ENCODE measurements at regions of chr6 and their contacts with region 1.

Region 1: GRCh38 chr6:165468836-165469235 is 159.4 kb upstream of the C6orf118 start:
- DNase-seq: no peak
- H3K4me3 ChIP-seq: no peak overlapping the region
- H3K27ac ChIP-seq: no peak overlapping the region
- H3K4me1 ChIP-seq: no peaks in the 10 kb centered on the region
- H3K27me3 ChIP-seq: no peaks in the 10 kb centered on the region
- CTCF ChIP-seq: no peak
- POLR2A ChIP-seq: no peak

Region 2: GRCh38 chr6:165536911-165537310 is 68.1 kb after region 1 on chr6:
- intact Hi-C with region 1: loop called (anchors 5 kb)
- DNase-seq: no peak
- H3K4me3 ChIP-seq: no peak overlapping the region
- H3K27ac ChIP-seq: no peak overlapping the region
- H3K4me1 ChIP-seq: no peaks in the 10 kb centered on the region
- H3K27me3 ChIP-seq: no peaks in the 10 kb centered on the region
- CTCF ChIP-seq: no peak
- POLR2A ChIP-seq: no peak

Region 3: GRCh38 chr6:166586424-166587156 is 1117.8 kb after region 1 on chr6 and contains the start of gene RAMACL:
- intact Hi-C with region 1: no loop called
- DNase-seq: no peak
- H3K4me3 ChIP-seq: no peak within 1 kb of the TSS
- H3K27ac ChIP-seq: no peak within 1 kb of the TSS
- H3K4me1 ChIP-seq: no peaks in the 10 kb centered on the region
- H3K27me3 ChIP-seq: no peaks in the 10 kb centered on the region
- CTCF ChIP-seq: no peak
- POLR2A ChIP-seq: no peak
- total RNA-seq, gene RAMACL: 2.5 to 13.4 (median 2.6) TPM